ENCODE measurements at regions of chr6 and their contacts with region 1.

Region 1: GRCh38 chr6:37819177-37819823 is at the start of gene ZFAND3:
- DNase-seq: peak; percentile 81 to 97
- H3K4me3 ChIP-seq: peak within 1 kb of the TSS; percentile 94
- H3K27ac ChIP-seq: peak within 1 kb of the TSS; percentile 66
- H3K4me1 ChIP-seq: peaks cover 24% of the 10 kb centered on the region
- H3K27me3 ChIP-seq: no peaks in the 10 kb centered on the region
- CTCF ChIP-seq: no peak
- total RNA-seq, gene ZFAND3: 37.9 and 46.8 TPM in 2 replicates

Region 2: DNA sequence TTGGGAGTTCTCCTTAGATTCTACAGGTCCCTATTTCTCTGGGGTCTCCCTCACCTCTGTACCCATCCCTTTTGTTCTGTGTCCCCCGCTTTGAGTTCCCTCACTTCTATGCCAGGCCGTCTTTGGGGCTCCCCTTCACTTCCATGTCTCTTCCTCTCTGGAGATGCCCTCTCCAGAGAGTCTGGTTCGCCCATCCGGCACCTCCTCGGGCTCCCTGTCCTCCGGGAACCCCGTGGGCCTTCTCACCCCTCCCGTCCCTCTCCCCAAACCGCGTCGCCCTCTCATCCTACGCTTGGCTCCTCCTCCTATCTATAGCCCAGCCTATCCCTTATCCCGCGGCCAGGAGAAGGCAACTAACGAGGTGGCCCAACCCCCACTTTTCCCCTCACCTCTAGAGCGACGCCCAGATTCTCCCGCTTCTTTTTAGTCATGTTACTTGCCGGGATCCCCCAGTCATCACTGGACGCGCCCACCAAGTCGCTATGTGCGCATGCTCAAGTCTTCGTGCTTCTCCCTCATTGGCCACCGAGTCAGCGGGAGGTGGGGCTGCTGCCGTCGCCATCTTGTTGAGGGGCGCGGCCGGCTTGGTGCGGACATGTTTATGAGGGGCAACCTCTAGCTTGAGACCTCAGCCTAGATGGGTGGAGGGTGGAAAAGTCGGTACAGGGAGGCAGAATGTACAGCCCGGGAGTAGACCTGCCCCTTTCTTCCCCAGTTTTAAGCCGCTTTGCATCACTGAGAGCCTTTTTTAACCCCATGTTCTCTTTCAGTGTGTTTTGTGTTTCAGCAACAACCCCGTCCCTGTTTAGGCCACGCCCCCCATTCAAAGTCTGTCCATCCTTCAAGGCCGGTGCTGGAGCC is 319.6 kb before region 1 on chr6 and contains the start of gene CCDC167:
- CTCF ChIA-PET with region 1: no interaction called
- POLR2A ChIA-PET with region 1: no interaction called
- intact Hi-C with region 1: no loop called
- DNase-seq: peak; percentile 93 to 97
- H3K4me3 ChIP-seq: peak within 1 kb of the TSS; percentile 62
- H3K27ac ChIP-seq: peak within 1 kb of the TSS; percentile 20; the same call in 1 of the 2 replicates
- H3K4me1 ChIP-seq: 0 out of 2 replicates have a peak, but pooled peaks cover 6% of the 10 kb centered on the region
- H3K27me3 ChIP-seq: no peaks in the 10 kb centered on the region; the same call in 1 of the 2 replicates
- CTCF ChIP-seq: no peak
- total RNA-seq, gene CCDC167: 29.4 and 33.5 TPM in 2 replicates

Region 3: GRCh38 chr6:37704066-37704465 is 115.2 kb before region 1 on chr6:
- CTCF ChIA-PET with region 1: interaction called, 14 read pairs
- POLR2A ChIA-PET with region 1: interaction called, 7 read pairs
- intact Hi-C with region 1: no loop called
- DNase-seq: no peak
- H3K4me3 ChIP-seq: no peak overlapping the region
- H3K27ac ChIP-seq: no peak overlapping the region
- H3K4me1 ChIP-seq: no peaks in the 10 kb centered on the region
- H3K27me3 ChIP-seq: peaks cover 15% of the 10 kb centered on the region; the same call in 1 of the 2 replicates
- CTCF ChIP-seq: no peak

Region 4: DNA sequence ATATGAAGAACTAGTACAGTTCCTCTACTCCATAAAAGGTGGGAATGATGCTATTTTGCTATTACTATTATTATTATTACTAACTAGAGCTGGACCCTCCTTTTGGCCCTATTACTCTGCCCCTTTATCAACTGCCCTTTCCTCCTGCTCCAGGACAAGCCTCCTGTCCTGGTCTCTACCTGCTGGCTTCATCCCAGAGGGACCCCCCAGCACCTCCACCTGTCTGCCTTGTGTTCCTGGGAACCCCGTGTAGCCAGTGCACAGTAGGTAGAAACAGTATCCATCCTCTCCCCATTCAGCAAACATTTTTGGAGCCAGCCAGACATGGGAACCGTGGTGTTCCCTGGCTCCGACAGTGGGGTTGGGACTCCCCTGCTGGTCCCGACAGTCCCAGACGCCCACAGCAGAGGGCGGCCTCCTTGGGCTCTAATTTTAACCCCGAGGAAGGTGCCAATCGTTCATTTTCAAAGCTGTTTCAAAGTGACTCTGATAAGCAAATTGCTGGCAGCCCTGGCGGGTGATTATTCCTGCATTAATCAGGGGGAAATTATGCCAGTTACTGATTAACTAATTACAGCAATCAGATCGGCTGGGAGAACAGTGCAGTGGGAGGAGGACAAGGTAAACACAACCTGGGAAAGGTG is 77.4 kb before region 1 on chr6:
- CTCF ChIA-PET with region 1: interaction called, 15 read pairs
- POLR2A ChIA-PET with region 1: no interaction called
- intact Hi-C with region 1: no loop called
- DNase-seq: peak in 1 of 2 experiments; percentile 24
- H3K4me3 ChIP-seq: no peak overlapping the region
- H3K27ac ChIP-seq: no peak overlapping the region
- H3K4me1 ChIP-seq: no peaks in the 10 kb centered on the region
- H3K27me3 ChIP-seq: peaks cover 4% of the 10 kb centered on the region; the same call in 1 of the 2 replicates
- CTCF ChIP-seq: peak; percentile 56

Region 5: DNA sequence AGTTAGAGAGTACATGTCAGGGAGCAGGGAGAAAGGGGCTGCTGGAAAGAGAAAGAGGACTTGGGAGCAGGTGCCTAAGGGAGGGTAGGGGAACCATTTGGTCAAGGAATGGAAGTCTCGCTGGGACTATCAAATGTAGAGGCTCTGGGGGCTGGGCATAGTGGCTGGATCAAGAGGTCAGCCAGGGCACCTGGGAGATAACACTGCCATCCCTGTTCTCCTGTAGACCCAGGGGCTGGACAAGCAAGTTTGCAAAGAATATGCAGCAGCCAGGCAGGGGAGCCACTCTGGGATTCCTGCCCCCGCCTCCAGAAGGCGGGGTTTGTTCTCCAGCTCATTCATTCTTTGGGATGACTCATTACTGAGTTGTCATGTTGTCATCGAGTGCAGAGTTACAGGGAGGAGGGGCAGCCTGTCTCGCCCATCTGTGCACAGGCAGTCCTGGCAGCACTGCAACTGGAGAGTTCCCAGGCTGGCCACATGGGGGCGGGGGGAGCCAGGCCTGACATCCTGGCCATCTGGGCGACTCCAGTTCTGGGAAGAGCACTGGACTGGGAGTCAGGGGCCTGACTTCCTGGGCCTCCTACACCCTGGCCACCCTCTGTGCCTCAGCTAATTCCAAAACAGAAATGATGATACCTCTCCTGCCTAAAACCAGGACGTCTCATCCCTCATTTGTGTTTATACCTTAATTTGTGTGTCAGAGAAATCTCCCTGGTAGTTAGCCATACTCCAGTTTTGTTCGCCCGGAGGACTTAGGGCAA is 28.0 kb before region 1 on chr6:
- CTCF ChIA-PET with region 1: interaction called, 9 read pairs
- POLR2A ChIA-PET with region 1: interaction called, 16 read pairs
- intact Hi-C with region 1: loop called (anchors 1 kb)
- DNase-seq: peak; percentile 93
- H3K4me3 ChIP-seq: no peak overlapping the region
- H3K27ac ChIP-seq: no peak overlapping the region
- H3K4me1 ChIP-seq: peaks cover 16% of the 10 kb centered on the region
- H3K27me3 ChIP-seq: no peaks in the 10 kb centered on the region
- CTCF ChIP-seq: peak; percentile 95

Region 6: GRCh38 chr6:37806213-37806612 is 13.1 kb before region 1 on chr6:
- CTCF ChIA-PET with region 1: interaction called, 3 read pairs
- POLR2A ChIA-PET with region 1: interaction called, 16 read pairs
- intact Hi-C with region 1: no loop called
- DNase-seq: no peak
- H3K4me3 ChIP-seq: no peak overlapping the region
- H3K27ac ChIP-seq: no peak overlapping the region
- H3K4me1 ChIP-seq: peaks cover 31% of the 10 kb centered on the region
- H3K27me3 ChIP-seq: no peaks in the 10 kb centered on the region
- CTCF ChIP-seq: no peak

Region 7: DNA sequence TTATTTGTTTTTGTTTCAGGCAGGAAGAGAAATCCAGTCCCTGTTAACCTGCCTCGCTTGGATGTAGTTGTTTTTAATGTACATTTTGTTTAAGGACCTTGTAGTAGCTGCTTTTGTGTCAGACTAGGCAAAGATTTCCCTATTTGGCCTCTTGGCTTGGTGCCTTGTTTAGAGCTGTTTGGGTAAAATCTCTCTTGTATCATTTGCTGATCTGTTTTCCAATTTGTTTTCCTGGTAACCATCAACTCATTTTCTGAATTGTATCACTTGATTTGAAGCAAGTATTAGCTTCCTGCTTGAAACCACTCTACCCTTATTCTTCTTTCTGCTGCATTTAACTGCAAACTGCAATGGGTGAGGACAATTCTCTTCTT is 160.9 kb after region 1 on chr6:
- CTCF ChIA-PET with region 1: no interaction called
- POLR2A ChIA-PET with region 1: interaction called, 21 read pairs
- intact Hi-C with region 1: no loop called
- DNase-seq: no peak
- H3K4me3 ChIP-seq: no peak overlapping the region
- H3K27ac ChIP-seq: no peak overlapping the region
- H3K4me1 ChIP-seq: no peaks in the 10 kb centered on the region
- H3K27me3 ChIP-seq: no peaks in the 10 kb centered on the region
- CTCF ChIP-seq: no peak

Region 8: GRCh38 chr6:38134704-38135088 is 315.4 kb after region 1 on chr6:
- CTCF ChIA-PET with region 1: no interaction called
- POLR2A ChIA-PET with region 1: no interaction called
- intact Hi-C with region 1: loop called (anchors 2 kb)
- DNase-seq: no peak
- H3K4me3 ChIP-seq: no peak overlapping the region
- H3K27ac ChIP-seq: peak overlapping the region; percentile 55
- H3K4me1 ChIP-seq: peaks cover 20% of the 10 kb centered on the region
- H3K27me3 ChIP-seq: no peaks in the 10 kb centered on the region
- CTCF ChIP-seq: no peak